Calu3 (cell line): ENCODE measurements at regions of chr1 and their contacts with region 1.

Region 1: DNA sequence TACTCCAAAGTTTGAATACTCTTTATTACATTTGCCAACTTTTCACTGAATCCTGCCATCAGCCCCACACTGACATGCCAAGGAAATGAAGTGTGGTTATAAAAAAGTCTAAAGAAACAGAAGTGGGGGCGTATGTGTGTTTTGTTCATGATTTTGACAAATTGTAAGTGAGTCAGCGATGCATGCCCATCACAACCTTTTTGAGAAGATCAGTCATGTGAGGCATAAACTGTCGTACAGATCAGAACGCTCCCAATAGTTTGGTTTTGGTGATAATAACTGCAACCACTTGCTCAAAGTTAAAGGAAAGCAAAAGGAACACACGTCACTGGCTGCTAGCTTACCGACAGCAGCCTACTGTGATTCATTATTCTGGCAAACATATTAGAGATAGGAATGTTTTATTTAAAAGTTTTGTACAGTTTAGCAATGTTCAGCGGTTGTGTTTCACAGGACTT is 95.6 kb downstream of the RGS2 start:
- DNase-seq: peak; percentile 10
- H3K4me3 Mint-ChIP-seq: peak overlapping the region; percentile 13
- H3K27ac Mint-ChIP-seq: peak overlapping the region; percentile 29
- H3K4me1 Mint-ChIP-seq: no peaks in the 10 kb centered on the region
- H3K27me3 Mint-ChIP-seq: no peaks in the 10 kb centered on the region
- CTCF ChIP-seq: no peak

Region 2: GRCh38 chr1:192839164-192840035 is 65.1 kb before region 1 on chr1:
- CTCF ChIA-PET with region 1: no interaction called
- intact Hi-C with region 1: no loop called
- DNase-seq: no peak
- H3K4me3 Mint-ChIP-seq: no peak overlapping the region
- H3K27ac Mint-ChIP-seq: no peak overlapping the region
- H3K4me1 Mint-ChIP-seq: peaks cover 25% of the 10 kb centered on the region
- H3K27me3 Mint-ChIP-seq: no peaks in the 10 kb centered on the region
- CTCF ChIP-seq: no peak

Region 3: GRCh38 chr1:192967901-192968300 is 63.4 kb after region 1 on chr1:
- CTCF ChIA-PET with region 1: no interaction called
- intact Hi-C with region 1: loop called (anchors 5 kb)
- DNase-seq: no peak
- H3K4me3 Mint-ChIP-seq: no peak overlapping the region
- H3K27ac Mint-ChIP-seq: no peak overlapping the region
- H3K4me1 Mint-ChIP-seq: peaks cover 46% of the 10 kb centered on the region
- H3K27me3 Mint-ChIP-seq: no peaks in the 10 kb centered on the region
- CTCF ChIP-seq: no peak